GM12878 (cell line): ENCODE measurements at regions of chr3 and their contacts with region 1.

Region 1: DNA sequence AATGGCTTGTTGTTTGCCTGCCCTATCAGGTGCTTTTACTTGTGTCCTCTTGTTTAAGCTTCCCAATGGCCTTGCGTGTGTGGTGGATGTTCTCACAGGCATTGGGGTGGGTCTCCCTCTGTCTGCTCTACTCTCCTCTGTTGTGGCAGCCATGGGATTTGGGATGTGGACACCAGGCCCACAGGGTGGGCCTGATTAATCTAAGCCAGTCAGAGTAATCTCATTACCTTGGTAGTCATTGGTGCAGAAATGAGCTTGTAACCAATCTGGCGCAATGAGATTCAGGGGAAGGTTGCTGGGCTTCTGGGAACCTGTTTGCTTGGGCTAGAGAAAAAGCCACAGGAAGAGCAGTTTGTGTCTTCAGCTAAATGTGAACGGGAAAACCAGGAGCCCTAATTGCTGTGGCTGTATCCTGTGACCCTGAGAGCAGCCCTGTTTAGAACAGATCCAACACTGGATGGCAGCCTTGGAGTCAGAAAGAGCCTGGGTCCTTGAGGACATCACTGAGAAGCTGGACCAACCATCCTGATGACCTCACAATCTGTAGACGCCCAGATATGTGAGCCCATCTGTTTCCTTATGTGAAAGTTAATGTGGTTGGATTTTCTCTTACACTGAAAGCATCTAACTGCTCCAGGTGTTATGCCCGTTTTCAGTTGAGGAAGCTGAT is 157.3 kb upstream of the UBE2E1 start:
- DNase-seq: no peak
- ATAC-seq: peak; percentile 20
- H3K4me3 ChIP-seq: no peak overlapping the region
- H3K27ac ChIP-seq: no peak overlapping the region
- H3K4me1 ChIP-seq: peaks cover 26% of the 10 kb centered on the region
- H3K27me3 ChIP-seq: no peaks in the 10 kb centered on the region
- CTCF ChIP-seq: peak in 1 of 3 experiments; percentile 7; a peak in 1 of 6 replicates
- EP300 ChIP-seq: no peak
- POLR2A ChIP-seq: no peak
- RAD21 ChIP-seq: peak; percentile 43; the same call in 1 of the 2 replicates

Region 2: GRCh38 chr3:23304424-23304823 is 344.0 kb before region 1 on chr3:
- CTCF ChIA-PET with region 1: no interaction called
- POLR2A ChIA-PET with region 1: no interaction called
- RAD21 ChIA-PET with region 1: no interaction called
- SMC1A ChIA-PET with region 1: no interaction called
- in situ Hi-C with region 1: no loop called
- intact Hi-C with region 1: no loop called
- DNase-seq: no peak
- ATAC-seq: no peak
- H3K4me3 ChIP-seq: no peak overlapping the region
- H3K27ac ChIP-seq: no peak overlapping the region
- H3K4me1 ChIP-seq: no peaks in the 10 kb centered on the region
- H3K27me3 ChIP-seq: no peaks in the 10 kb centered on the region
- CTCF ChIP-seq: no peak
- EP300 ChIP-seq: no peak
- POLR2A ChIP-seq: no peak
- RAD21 ChIP-seq: no peak

Region 3: GRCh38 chr3:23550402-23550801 is 98.1 kb before region 1 on chr3:
- CTCF ChIA-PET with region 1: no interaction called
- POLR2A ChIA-PET with region 1: no interaction called
- RAD21 ChIA-PET with region 1: interaction called, 6 read pairs
- SMC1A ChIA-PET with region 1: interaction called, 3 read pairs
- in situ Hi-C with region 1: no loop called
- intact Hi-C with region 1: loop called (anchors 5 kb)
- DNase-seq: peak; percentile 39
- ATAC-seq: peak; percentile 90
- H3K4me3 ChIP-seq: no peak overlapping the region
- H3K27ac ChIP-seq: no peak overlapping the region
- H3K4me1 ChIP-seq: peaks cover 11% of the 10 kb centered on the region
- H3K27me3 ChIP-seq: no peaks in the 10 kb centered on the region
- CTCF ChIP-seq: no peak
- EP300 ChIP-seq: peak in 1 of 2 experiments; percentile 62; a peak in 1 of 4 replicates
- POLR2A ChIP-seq: no peak
- RAD21 ChIP-seq: no peak

Region 4: GRCh38 chr3:23629181-23629893 is 19.1 kb before region 1 on chr3:
- CTCF ChIA-PET with region 1: interaction called, 4 read pairs
- POLR2A ChIA-PET with region 1: no interaction called
- RAD21 ChIA-PET with region 1: interaction called, 5 read pairs
- SMC1A ChIA-PET with region 1: interaction called, 14 read pairs
- in situ Hi-C with region 1: no loop called
- intact Hi-C with region 1: no loop called
- DNase-seq: no peak
- ATAC-seq: no peak
- H3K4me3 ChIP-seq: no peak overlapping the region
- H3K27ac ChIP-seq: no peak overlapping the region
- H3K4me1 ChIP-seq: no peaks in the 10 kb centered on the region
- H3K27me3 ChIP-seq: no peaks in the 10 kb centered on the region
- CTCF ChIP-seq: no peak
- EP300 ChIP-seq: no peak
- POLR2A ChIP-seq: no peak
- RAD21 ChIP-seq: no peak

Region 5: DNA sequence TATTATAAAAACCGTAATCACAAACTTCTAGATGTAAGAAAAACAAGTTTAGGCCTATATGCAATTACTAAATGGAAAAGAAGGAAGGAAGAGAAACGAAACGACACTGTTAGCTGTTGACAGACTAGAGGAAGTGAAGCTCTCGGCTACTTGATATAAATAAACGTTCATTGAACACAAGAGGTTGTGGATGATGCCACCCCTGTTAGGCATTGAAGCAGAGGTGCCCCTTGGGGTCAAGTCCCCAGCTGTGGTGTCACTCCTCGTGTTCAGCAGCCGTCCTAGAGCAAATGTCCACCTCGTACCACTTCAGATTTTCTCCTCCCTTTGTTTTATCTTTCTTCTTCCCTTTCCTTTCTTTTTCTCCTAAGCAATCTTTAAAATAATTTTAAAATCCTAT is 10.8 kb after region 1 on chr3:
- CTCF ChIA-PET with region 1: interaction called, 15 read pairs
- POLR2A ChIA-PET with region 1: interaction called, 8 read pairs
- RAD21 ChIA-PET with region 1: interaction called, 14 read pairs
- SMC1A ChIA-PET with region 1: interaction called, 14 read pairs
- in situ Hi-C with region 1: no loop called
- intact Hi-C with region 1: no loop called
- DNase-seq: peak; percentile 60
- ATAC-seq: peak; percentile 88
- H3K4me3 ChIP-seq: no peak overlapping the region
- H3K27ac ChIP-seq: peak overlapping the region; percentile 81
- H3K4me1 ChIP-seq: peaks cover 36% of the 10 kb centered on the region
- H3K27me3 ChIP-seq: no peaks in the 10 kb centered on the region
- CTCF ChIP-seq: no peak
- EP300 ChIP-seq: peak; percentile 36 to 56; a peak in 1 of 4 replicates
- POLR2A ChIP-seq: no peak
- RAD21 ChIP-seq: no peak